ENCODE measurements at regions of chr9 and their contacts with region 1.

Region 1: GRCh38 chr9:83334320-83334719 is 203.9 kb downstream of the FRMD3 start:
- DNase-seq: peak; percentile 91

Region 2: DNA sequence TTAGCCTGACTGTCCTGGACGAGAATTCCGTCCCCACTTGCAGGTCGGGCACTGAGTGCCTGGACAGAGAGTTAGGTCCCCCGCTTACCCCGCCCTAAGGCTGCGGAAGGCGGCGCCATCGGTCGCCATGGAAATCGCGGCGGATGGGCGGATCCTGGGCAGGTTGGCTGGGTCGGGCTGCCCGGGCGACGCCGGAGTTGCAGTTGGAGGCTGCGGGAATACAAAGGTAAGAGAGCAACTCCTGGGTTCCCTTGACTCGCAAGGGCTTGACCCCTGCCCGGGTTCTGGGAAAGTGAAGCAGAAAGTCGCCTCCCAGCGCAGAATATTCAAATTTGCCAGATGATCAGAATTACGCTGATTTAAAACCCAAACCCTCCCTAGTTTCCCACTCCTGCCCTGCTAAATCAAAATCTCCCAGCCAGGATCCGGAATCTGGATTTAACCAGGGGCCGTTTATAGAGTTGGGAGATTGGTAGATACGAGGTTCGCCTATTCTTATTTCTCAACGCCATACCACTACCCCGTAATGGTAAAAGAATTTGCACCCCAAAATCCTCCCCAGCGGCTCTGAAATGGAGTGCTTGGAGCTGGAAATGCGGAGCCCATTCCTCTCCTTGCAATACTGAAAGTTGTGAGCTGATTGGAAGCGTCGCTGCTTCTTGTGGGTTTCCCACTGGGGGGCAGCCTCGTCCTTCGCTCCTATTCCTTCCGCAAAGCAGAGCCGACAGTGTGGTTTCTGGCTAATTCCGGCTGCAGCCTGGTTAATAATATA is 115.0 kb before region 1 on chr9:
- intact Hi-C with region 1: loop called (anchors 2 kb)
- DNase-seq: peak; percentile 88

Region 3: DNA sequence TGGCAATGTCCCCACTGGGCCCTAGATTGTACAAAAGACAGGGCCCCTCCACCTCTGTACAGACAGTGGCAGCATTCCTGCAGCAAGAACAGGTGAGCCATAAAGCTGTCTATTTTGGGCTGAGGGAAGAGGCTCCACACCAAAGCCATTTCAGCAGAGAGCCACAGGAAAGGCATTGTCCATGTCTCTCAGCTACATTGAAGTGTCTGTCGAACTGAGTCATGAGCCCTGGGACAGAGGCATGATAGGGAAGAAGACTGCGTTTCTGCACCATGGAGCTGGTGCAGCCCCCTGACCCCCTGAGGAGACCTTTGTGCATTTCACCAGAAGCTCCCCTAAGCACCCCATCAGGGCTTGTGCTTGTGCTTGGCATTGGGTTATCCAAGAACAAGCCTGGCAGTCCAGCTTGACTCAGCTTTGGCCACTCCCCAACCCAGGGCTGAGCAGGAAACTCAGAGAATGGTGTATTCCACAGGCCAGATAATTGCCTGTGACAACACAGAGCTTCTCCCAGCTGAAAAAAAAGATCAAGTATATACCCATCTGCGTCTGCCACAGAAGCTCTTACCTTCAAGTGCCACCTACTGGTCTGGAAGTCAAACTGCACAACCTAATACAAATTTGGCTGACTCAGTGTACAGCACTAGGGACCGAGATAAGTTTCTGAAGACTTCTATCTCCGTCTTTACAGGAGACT is 209.8 kb after region 1 on chr9:
- intact Hi-C with region 1: loop called (anchors 2 kb)
- DNase-seq: no peak

Measured in cardiac septum (tissue), 1 donor.